Caco-2 (cell line): ENCODE measurements at regions of chr22 and their contacts with region 1.

Region 1: DNA sequence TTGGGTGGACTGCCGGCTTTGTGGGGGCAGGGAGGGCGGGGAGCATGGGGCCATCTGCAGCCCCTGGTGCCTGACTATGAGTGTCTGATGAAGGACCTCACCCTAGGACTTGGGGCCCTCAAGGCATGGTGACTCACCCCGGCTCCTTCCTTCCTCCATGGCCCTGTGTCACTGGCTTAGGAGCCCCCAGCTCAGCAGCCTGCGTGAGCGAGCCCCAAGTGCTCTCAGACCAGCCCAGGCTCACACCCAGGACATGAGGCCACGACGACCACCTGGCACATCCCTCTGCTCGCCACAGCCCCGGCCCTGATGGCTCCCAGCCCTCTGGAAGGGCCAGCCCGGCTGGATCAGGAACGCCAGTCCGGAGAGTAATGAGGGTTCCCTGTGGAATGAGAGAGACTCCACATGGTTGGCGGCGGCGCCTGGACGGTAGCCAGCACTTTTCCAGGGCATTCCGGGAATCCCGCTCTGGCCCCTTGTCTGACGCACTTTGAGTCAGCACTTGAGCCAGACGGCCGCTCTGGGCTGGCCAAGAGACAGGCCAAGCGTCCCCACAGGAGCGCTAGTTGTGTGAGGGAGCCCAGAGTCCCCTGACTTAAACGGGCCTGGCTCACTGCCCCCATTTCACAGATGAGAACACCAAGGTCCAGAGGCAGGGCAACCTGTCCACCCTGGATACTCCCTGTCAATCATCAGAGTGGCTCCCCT is 50.7 kb upstream of the SHISAL1 start:
- DNase-seq: no peak
- H3K4me3 ChIP-seq: no peak overlapping the region
- H3K4me3 Mint-ChIP-seq: no peak overlapping the region
- H3K27ac Mint-ChIP-seq: no peak overlapping the region
- H3K4me1 ChIP-seq: no peaks in the 10 kb centered on the region
- H3K4me1 Mint-ChIP-seq: no peaks in the 10 kb centered on the region
- H3K27me3 ChIP-seq: no peaks in the 10 kb centered on the region
- H3K27me3 Mint-ChIP-seq: peaks cover 13% of the 10 kb centered on the region
- CTCF ChIP-seq: no peak

Region 2: DNA sequence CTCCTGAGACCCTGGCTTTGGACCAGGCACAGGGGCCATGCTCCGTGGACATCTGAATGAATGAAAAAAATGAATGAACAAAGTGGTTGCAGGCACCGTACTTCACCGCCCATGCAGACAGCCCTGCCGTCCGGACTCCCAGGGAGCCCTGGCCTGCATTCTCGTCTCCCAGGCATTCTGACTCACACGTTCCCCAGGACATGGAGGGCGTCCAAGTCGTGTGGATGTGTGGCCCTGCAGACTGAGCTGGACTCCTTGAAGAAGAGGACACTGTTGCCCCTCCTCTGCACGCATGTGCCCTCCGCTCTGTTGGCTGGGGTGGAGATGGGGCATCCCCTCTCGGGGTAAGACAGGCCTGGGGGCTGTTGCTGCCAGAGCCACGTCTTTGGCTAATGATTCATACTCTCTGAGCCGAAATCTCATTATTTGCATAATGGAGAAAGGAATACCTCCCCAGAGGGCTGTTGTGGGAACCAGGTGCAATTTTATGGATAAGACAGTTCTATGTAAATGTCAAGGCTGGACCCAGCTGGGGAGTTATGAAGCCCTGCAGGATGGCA is 84.9 kb after region 1 on chr22:
- CTCF ChIA-PET with region 1: no interaction called
- POLR2A ChIA-PET with region 1: no interaction called
- intact Hi-C with region 1: loop called (anchors 10 kb)
- DNase-seq: no peak
- H3K4me3 ChIP-seq: no peak overlapping the region
- H3K4me3 Mint-ChIP-seq: no peak overlapping the region
- H3K27ac Mint-ChIP-seq: no peak overlapping the region
- H3K4me1 ChIP-seq: no peaks in the 10 kb centered on the region
- H3K4me1 Mint-ChIP-seq: no peaks in the 10 kb centered on the region
- H3K27me3 ChIP-seq: no peaks in the 10 kb centered on the region
- H3K27me3 Mint-ChIP-seq: peaks cover 2% of the 10 kb centered on the region
- CTCF ChIP-seq: no peak